ENCODE measurements at regions of chr6 and their contacts with region 1.

Region 1: DNA sequence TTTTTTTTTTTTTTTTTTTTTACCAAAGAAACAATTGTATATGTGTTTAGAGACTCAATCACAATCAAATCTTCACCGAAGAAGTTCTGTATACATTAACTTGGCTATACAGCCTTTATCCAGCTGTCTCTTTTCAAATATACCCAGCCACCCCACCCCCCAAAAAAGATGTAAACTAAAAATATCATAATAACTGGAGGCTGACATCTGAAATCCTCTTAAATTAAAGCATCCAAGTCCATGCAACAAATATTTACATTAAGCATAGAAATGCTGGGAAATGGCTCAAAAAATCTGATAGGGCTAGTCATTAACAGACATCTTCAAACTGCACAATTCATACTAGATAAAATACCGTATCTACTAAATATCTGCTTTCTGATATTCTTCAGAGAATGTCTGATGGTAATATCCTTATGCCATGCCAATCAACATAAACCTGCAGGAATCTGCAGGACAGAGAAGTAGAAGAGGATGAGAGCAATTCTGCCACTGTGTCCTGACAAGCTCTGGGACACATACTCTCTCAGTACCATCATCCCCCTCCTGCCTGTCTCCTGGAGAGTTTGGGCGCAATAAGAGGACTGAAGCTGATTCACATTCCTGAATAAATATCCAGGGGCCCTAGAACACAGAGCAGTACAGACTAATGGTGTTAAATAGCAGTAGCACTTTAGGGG is 152.4 kb downstream of the KIF6 start:
- DNase-seq: no peak
- ATAC-seq: no peak
- H3K4me3 ChIP-seq: no peak overlapping the region
- H3K27ac ChIP-seq: no peak overlapping the region
- H3K4me1 ChIP-seq: no peaks in the 10 kb centered on the region
- H3K27me3 ChIP-seq: no peaks in the 10 kb centered on the region
- CTCF ChIP-seq: no peak
- EP300 ChIP-seq: no peak
- POLR2A ChIP-seq: no peak
- RAD21 ChIP-seq: no peak

Region 2: GRCh38 chr6:39543095-39543494 is 29.7 kb before region 1 on chr6:
- CTCF ChIA-PET with region 1: no interaction called
- POLR2A ChIA-PET with region 1: no interaction called
- RAD21 ChIA-PET with region 1: no interaction called
- SMC1A ChIA-PET with region 1: no interaction called
- in situ Hi-C with region 1: no loop called
- intact Hi-C with region 1: no loop called
- DNase-seq: no peak
- ATAC-seq: no peak
- H3K4me3 ChIP-seq: no peak overlapping the region
- H3K27ac ChIP-seq: no peak overlapping the region
- H3K4me1 ChIP-seq: no peaks in the 10 kb centered on the region
- H3K27me3 ChIP-seq: no peaks in the 10 kb centered on the region
- CTCF ChIP-seq: no peak
- EP300 ChIP-seq: no peak
- POLR2A ChIP-seq: no peak
- RAD21 ChIP-seq: no peak

Region 3: GRCh38 chr6:39553860-39554802 is 18.7 kb before region 1 on chr6:
- CTCF ChIA-PET with region 1: no interaction called
- POLR2A ChIA-PET with region 1: interaction called, 13 read pairs
- RAD21 ChIA-PET with region 1: no interaction called
- SMC1A ChIA-PET with region 1: interaction called, 4 read pairs
- in situ Hi-C with region 1: no loop called
- intact Hi-C with region 1: no loop called
- DNase-seq: no peak
- ATAC-seq: no peak; the same call in 2 of the 3 replicates
- H3K4me3 ChIP-seq: no peak overlapping the region
- H3K27ac ChIP-seq: no peak overlapping the region
- H3K4me1 ChIP-seq: no peaks in the 10 kb centered on the region
- H3K27me3 ChIP-seq: no peaks in the 10 kb centered on the region
- CTCF ChIP-seq: no peak
- EP300 ChIP-seq: no peak
- POLR2A ChIP-seq: no peak
- RAD21 ChIP-seq: no peak

Region 4: GRCh38 chr6:39765508-39766065 is 192.8 kb after region 1 on chr6:
- CTCF ChIA-PET with region 1: no interaction called
- POLR2A ChIA-PET with region 1: no interaction called
- RAD21 ChIA-PET with region 1: no interaction called
- SMC1A ChIA-PET with region 1: no interaction called
- in situ Hi-C with region 1: no loop called
- intact Hi-C with region 1: no loop called
- DNase-seq: no peak
- ATAC-seq: no peak; the same call in 2 of the 3 replicates
- H3K4me3 ChIP-seq: no peak overlapping the region
- H3K27ac ChIP-seq: no peak overlapping the region
- H3K4me1 ChIP-seq: no peaks in the 10 kb centered on the region
- H3K27me3 ChIP-seq: no peaks in the 10 kb centered on the region
- CTCF ChIP-seq: no peak
- EP300 ChIP-seq: no peak
- POLR2A ChIP-seq: no peak
- RAD21 ChIP-seq: no peak

Measured in GM12878 (cell line).